ENCODE measurements at regions of chr14 and their contacts with region 1.

Region 1: GRCh38 chr14:59711080-59711479 is 134.5 kb upstream of the CCDC175 start:
- DNase-seq: no peak

Region 2: GRCh38 chr14:59918824-59919569 is 207.9 kb after region 1 on chr14:
- intact Hi-C with region 1: loop called (anchors 10 kb)
- DNase-seq: peak in 33 of 42 donors; percentile 4 to 60 (median 26)